ENCODE measurements at regions of chr6 and their contacts with region 1.

Region 1: GRCh38 chr6:10722820-10723566 is at the start of gene TMEM14C:
- DNase-seq: peak; percentile 100
- ATAC-seq: peak; percentile 99
- total RNA-seq, gene TMEM14C: 120 TPM

Region 2: DNA sequence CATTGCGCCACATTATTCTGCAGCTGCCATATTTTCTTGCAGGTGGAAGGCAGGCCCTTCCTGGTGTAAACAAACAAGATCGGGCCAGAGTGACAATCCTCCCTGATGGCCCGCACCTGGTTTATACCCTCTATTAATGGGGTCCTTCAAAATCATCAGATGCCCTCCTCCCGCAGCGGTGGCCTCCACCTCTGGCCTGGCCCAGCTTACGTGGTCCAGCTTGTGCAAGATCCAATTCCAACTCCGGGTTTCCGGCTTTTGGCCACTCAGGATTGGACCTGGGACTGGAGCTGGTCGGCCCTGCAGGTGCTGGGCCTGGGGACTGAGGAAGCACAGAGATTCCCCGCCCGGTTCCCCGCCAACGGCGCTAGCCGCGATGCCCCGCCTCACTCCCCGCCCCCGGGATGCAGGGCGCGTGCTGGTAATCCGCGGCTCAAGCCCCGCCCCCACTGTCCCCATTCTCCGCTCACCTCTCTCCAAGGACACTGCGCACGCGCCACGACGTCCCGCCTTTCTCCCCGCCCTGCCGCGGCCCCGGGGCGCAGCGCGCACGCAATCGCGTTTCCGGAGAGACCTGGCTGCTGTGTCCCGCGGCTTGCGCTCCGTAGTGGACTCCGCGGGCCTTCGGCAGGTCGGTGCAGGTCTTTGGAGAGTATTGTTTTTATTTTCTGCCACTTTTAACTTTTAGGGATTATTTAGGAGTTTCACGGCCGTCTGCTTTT is 24.4 kb after region 1 on chr6 and contains the start of gene TMEM14B:
- intact Hi-C with region 1: loop called (anchors 1 kb)
- DNase-seq: peak; percentile 100
- ATAC-seq: peak; percentile 99
- total RNA-seq, gene TMEM14B: 106 TPM

Measured in Right ventricle myocardium inferior (tissue), 1 donor.